H1 (cell line): ENCODE measurements at regions of chr2 and their contacts with region 1.

Region 1: DNA sequence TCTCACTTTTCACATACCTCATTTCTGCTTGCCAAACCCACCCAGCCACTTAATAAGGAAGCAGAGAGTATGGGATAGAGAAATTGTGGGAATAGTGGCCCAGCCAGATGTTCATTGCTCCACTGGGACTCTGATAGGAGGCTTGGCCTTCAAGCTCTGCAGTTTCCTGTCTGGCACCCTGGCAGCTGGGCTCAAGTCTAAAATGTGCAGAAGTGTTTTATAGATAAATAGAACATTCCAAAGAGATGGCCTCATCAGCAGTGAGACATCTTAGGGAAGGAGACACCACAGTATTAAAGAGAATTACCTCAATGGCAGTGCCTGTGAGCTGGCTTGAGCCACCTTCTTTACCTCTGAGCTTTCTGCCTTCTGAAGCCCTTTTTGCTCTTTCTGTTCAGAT is 24.7 kb downstream of the COPS7B start:
- DNase-seq: no peak
- H3K4me3 ChIP-seq: no peak overlapping the region
- H3K27ac ChIP-seq: no peak overlapping the region
- H3K4me1 ChIP-seq: no peaks in the 10 kb centered on the region
- H3K27me3 ChIP-seq: no peaks in the 10 kb centered on the region
- CTCF ChIP-seq: no peak
- EP300 ChIP-seq: no peak
- POLR2A ChIP-seq: no peak
- RAD21 ChIP-seq: no peak

Region 2: DNA sequence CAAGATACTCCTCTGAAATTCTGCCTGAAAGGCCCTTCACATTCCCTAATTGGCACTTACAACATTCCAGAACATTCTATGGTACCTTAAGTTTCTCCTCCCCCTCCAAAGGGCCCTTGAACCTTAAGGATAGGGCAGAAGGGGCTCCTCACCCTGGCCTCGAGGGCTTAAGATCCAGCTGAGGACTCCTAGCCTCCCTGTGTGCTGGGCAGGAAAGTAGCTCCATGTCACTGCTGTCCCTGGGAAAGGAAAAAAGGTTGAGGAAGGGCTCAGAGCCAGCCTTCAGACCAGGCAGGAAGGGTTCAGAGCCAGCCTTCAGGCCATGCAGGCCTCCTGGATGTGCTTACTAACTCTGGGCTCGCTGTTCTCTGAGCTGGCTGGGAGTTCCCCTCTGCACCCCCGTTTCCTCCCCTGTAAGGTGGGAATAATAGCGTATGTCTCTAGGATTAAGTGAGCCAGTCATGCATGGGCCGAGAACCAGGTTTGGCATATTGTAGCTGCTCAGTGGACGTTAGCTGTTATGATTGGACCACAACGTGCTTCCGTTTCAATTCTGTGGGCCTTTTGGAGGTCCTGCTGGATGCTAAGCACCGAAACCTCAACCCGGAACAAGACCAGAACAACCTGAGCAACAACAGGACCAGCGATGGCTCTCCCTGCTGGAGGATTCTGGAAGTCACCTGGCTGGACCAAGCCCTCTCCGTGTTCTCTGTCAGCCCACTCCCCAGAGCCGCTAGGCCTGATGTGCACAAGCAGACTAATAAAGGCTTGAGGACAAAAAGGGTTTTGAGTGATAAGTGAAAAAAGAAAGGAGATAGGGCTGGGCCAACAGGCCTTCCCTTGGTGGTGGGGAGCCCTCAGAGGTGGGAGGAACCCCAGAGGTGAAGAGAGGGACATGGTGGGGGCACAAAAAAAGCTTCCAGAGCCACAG is 416.4 kb before region 1 on chr2:
- CTCF ChIA-PET with region 1: no interaction called
- POLR2A ChIA-PET with region 1: no interaction called
- DNase-seq: peak in 1 of 2 experiments; percentile 78
- H3K4me3 ChIP-seq: peak overlapping the region in 2 of 4 experiments; percentile 46 to 74; a peak in 5 of 8 replicates
- H3K27ac ChIP-seq: no peak overlapping the region
- H3K4me1 ChIP-seq: peaks cover 3 to 37% (median 20%) of the 10 kb centered on the region in 4 experiments
- H3K27me3 ChIP-seq: no peaks in the 10 kb centered on the region
- CTCF ChIP-seq: peak in 2 of 3 experiments; percentile 67 to 78; a peak in 3 of 4 replicates
- EP300 ChIP-seq: no peak
- POLR2A ChIP-seq: no peak
- RAD21 ChIP-seq: peak; percentile 58 to 75

Region 3: DNA sequence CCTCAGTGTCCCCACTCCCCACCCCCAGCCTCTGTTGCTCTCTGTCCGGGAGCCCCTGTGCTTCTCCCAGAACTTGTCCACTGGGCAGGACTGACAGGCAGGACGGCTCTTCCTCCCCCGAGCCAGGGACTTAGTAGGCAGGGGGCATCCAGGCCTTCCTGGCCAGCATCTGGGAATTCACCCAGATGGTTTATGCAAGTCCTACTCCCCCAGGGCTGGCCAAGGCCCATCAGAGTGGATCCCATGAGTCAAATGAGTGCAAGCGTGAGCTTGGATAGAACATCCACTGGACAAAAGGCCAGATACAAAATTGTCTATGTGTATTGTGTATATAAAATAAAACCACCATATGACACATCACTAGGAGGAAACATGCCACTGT is 288.1 kb before region 1 on chr2:
- CTCF ChIA-PET with region 1: no interaction called
- POLR2A ChIA-PET with region 1: no interaction called
- DNase-seq: no peak
- H3K4me3 ChIP-seq: no peak overlapping the region
- H3K27ac ChIP-seq: no peak overlapping the region
- H3K4me1 ChIP-seq: peaks cover 0 to 4% (median 2%) of the 10 kb centered on the region in 4 experiments; a peak in 1 of 7 replicates
- H3K27me3 ChIP-seq: no peaks in the 10 kb centered on the region
- CTCF ChIP-seq: no peak
- EP300 ChIP-seq: no peak
- POLR2A ChIP-seq: no peak
- RAD21 ChIP-seq: no peak

Region 4: GRCh38 chr2:231795291-231796040 is 15.4 kb before region 1 on chr2:
- CTCF ChIA-PET with region 1: interaction called, 74 read pairs
- POLR2A ChIA-PET with region 1: interaction called, 10 read pairs
- DNase-seq: no peak
- H3K4me3 ChIP-seq: no peak overlapping the region
- H3K27ac ChIP-seq: no peak overlapping the region
- H3K4me1 ChIP-seq: no peaks in the 10 kb centered on the region
- H3K27me3 ChIP-seq: no peaks in the 10 kb centered on the region
- CTCF ChIP-seq: peak in 1 of 3 experiments; percentile 74; a peak in 2 of 4 replicates
- EP300 ChIP-seq: no peak
- POLR2A ChIP-seq: no peak
- RAD21 ChIP-seq: no peak

Region 5: DNA sequence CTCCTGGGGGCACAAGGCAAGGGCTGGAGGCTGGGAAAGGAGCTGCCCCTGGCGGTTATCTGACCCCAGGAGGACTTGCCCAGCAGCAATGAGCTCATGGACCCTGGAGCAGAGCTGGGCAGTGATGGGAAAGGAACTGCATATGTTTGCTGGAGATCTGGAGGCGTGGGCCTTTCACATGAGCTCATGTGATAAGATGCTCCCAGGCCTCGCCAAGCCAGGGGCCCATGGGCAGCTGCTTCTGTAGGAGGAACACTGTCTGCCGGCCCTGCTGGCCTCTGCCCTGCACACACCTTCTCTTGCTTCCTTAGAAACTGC is 124.3 kb after region 1 on chr2:
- CTCF ChIA-PET with region 1: no interaction called
- POLR2A ChIA-PET with region 1: no interaction called
- DNase-seq: no peak
- H3K4me3 ChIP-seq: no peak overlapping the region
- H3K27ac ChIP-seq: no peak overlapping the region
- H3K4me1 ChIP-seq: no peaks in the 10 kb centered on the region
- H3K27me3 ChIP-seq: no peaks in the 10 kb centered on the region; a peak in 1 of 7 replicates
- CTCF ChIP-seq: no peak
- EP300 ChIP-seq: no peak
- POLR2A ChIP-seq: no peak
- RAD21 ChIP-seq: no peak